ENCODE measurements at regions of chr17 and their contacts with region 1.

Region 1: DNA sequence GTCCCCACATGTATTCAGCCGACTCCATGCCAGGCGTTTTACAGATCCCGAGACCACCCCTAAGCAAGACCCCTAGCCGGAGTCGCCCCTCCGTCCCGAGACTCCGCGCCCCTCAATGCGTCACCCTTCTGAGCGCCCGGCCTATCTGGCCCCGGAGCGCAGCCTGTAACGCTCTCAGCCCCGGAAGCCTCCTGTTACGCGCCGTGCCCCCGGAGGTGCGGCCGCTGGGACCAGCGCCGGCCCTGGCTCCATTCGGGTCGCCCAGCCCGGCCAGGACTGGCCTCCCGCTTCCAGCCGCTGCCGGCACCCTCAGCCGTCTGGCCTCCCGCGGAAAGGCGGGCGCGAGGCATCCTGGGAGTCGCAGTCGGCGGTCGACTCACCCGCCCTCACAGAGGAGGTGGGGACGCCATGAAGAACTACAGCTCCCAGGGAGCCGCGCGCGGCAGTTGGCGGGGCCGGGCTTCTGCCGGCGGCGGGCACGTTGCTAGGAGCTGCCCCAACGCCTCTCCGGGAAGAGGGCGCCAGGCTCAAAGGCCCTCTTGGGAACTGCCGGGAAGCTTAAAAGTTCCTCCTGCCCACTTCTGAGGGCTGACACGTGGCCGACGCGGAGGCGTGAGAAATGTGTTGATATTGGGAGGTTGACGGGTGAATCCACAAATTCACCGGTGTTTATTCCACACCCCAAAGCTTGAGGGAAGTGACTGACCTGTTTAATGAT is at the start of gene FBF1:
- DNase-seq: peak; percentile 82 to 89 (median 84)
- H3K4me3 ChIP-seq: peak within 1 kb of the TSS; percentile 63 to 74
- H3K4me3 Mint-ChIP-seq: peak within 1 kb of the TSS; percentile 84 to 93 (median 90)
- H3K27ac ChIP-seq: peak within 1 kb of the TSS; percentile 86
- H3K27ac Mint-ChIP-seq: peak within 1 kb of the TSS; percentile 48 to 96 (median 92)
- H3K4me1 ChIP-seq: peaks cover 10% of the 10 kb centered on the region
- H3K4me1 Mint-ChIP-seq: peaks cover 7 to 14% (median 10%) of the 10 kb centered on the region in 4 donors
- H3K27me3 ChIP-seq: no peaks in the 10 kb centered on the region
- H3K27me3 Mint-ChIP-seq: no peaks in the 10 kb centered on the region
- total RNA-seq, gene FBF1: 39.6 to 42.7 TPM

Region 2: GRCh38 chr17:75632863-75633485 is 307.9 kb before region 1 on chr17 and contains the start of gene SMIM5:
- CTCF ChIA-PET with region 1: no interaction called
- POLR2A ChIA-PET with region 1: no interaction called
- intact Hi-C with region 1: no loop called
- DNase-seq: peak; percentile 72 to 77 (median 75)
- H3K4me3 ChIP-seq: no peak within 1 kb of the TSS
- H3K4me3 Mint-ChIP-seq: peak within 1 kb of the TSS in 1 of 8 donors; percentile 26
- H3K27ac ChIP-seq: no peak within 1 kb of the TSS
- H3K27ac Mint-ChIP-seq: peak within 1 kb of the TSS in 1 of 7 donors; percentile 18
- H3K4me1 ChIP-seq: peaks cover 13% of the 10 kb centered on the region
- H3K4me1 Mint-ChIP-seq: peaks cover 2 to 13% (median 7%) of the 10 kb centered on the region in 4 donors
- H3K27me3 ChIP-seq: no peaks in the 10 kb centered on the region
- H3K27me3 Mint-ChIP-seq: no peaks in the 10 kb centered on the region
- total RNA-seq, gene SMIM5: not detected

Region 3: DNA sequence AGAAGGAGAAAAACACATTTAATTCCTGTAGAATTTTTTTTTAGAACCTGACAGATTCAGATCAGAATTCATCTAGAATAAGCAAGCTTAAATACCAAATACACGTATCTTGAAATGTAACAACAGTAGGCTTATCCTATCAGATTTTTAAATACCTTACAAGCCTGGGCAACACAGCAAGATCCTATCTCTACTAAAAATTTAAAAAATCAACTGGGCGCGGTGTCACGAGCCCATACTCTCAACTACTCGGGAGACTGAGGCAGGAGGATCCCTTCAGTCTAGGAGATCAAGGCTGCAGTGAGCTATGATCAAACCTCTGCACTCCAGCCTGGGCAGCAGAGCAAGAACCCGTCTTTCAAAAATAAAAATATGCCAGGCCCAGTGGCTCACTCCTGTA is 24.6 kb after region 1 on chr17:
- CTCF ChIA-PET with region 1: no interaction called
- POLR2A ChIA-PET with region 1: no interaction called
- intact Hi-C with region 1: no loop called
- DNase-seq: no peak
- H3K4me3 ChIP-seq: no peak overlapping the region
- H3K4me3 Mint-ChIP-seq: no peak overlapping the region
- H3K27ac ChIP-seq: no peak overlapping the region
- H3K27ac Mint-ChIP-seq: no peak overlapping the region
- H3K4me1 ChIP-seq: no peaks in the 10 kb centered on the region
- H3K4me1 Mint-ChIP-seq: peaks cover 6 to 16% (median 10%) of the 10 kb centered on the region in 4 donors
- H3K27me3 ChIP-seq: no peaks in the 10 kb centered on the region
- H3K27me3 Mint-ChIP-seq: no peaks in the 10 kb centered on the region

Region 4: GRCh38 chr17:75978938-75979704 is 38.2 kb after region 1 on chr17 and contains the starts of genes ACOX1 and TEN1:
- CTCF ChIA-PET with region 1: no interaction called
- POLR2A ChIA-PET with region 1: interaction called, 5 read pairs
- intact Hi-C with region 1: loop called (anchors 1 kb)
- DNase-seq: peak; percentile 93 to 97 (median 95)
- H3K4me3 ChIP-seq: peak within 1 kb of the TSS; percentile 61 to 88
- H3K4me3 Mint-ChIP-seq: peak within 1 kb of the TSS; percentile 93 to 99 (median 96)
- H3K27ac ChIP-seq: peak within 1 kb of the TSS; percentile 79
- H3K27ac Mint-ChIP-seq: peak within 1 kb of the TSS; percentile 99 to 100 (median 99)
- H3K4me1 ChIP-seq: peaks cover 30% of the 10 kb centered on the region
- H3K4me1 Mint-ChIP-seq: peaks cover 18 to 57% (median 34%) of the 10 kb centered on the region in 4 donors
- H3K27me3 ChIP-seq: no peaks in the 10 kb centered on the region
- H3K27me3 Mint-ChIP-seq: no peaks in the 10 kb centered on the region
- total RNA-seq, gene ACOX1: 30.4 to 31.7 TPM
- total RNA-seq, gene TEN1: 10.2 to 16.1 TPM

Measured in CD4-positive, alpha-beta memory T cell (primary cell).